ENCODE measurements at regions of chr10 and their contacts with region 1.

Region 1: DNA sequence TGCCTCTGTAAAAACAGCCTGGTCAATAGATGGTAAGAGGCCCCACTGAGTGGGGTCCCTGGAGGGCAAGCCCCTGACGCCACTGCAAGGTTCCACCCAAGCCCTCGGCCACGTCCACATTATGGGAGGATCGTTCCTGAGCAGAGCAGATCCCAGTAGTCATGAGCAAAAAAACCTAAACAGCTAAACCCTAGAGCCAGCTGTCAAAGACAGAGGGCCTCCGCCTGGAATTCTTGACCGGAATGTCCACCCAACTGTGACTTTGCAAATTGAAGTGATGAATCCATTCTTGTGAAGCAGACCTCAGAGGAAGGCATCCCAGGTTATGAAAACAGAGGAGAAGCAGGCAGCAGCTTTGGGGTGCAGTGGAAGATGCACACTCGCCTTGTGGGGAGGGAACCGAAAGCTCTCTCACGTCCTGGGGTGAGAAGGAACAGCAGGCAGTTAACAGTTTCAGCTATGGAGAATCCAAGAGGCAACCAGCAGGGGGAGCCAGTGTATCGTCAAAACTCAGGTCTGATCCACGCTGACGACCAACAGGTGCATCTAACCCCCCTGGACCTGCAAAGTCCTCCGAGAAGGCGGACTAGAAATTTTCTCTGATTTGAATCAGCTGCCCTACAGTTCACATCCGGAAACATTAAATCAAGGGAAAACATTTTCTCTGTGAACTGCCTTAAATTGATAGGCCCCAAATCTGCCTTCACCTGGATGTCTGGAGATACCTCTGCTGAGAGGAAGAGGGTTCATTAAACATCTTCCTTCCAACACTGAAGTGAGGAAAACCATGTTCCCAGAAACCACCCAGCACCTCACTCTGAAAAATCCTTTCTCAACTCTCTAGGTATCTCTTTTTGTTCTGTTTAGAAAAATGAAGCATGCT is 139.1 kb upstream of the PFKP start:
- DNase-seq: peak; percentile 58 to 95
- H3K4me3 ChIP-seq: no peak overlapping the region
- H3K27ac ChIP-seq: no peak overlapping the region
- H3K4me1 ChIP-seq: peaks cover 0 to 11% (median 5%) of the 10 kb centered on the region in 4 experiments; a peak in 6 of 7 replicates
- H3K27me3 ChIP-seq: peaks cover 0 to 2% (median 0%) of the 10 kb centered on the region in 4 experiments; a peak in 2 of 7 replicates
- CTCF ChIP-seq: peak; percentile 76 to 93 (median 92)
- EP300 ChIP-seq: no peak
- POLR2A ChIP-seq: no peak
- RAD21 ChIP-seq: peak; percentile 97 to 98

Region 2: GRCh38 chr10:2519139-2519538 is 409.1 kb before region 1 on chr10:
- CTCF ChIA-PET with region 1: no interaction called
- POLR2A ChIA-PET with region 1: no interaction called
- DNase-seq: no peak
- H3K4me3 ChIP-seq: no peak overlapping the region
- H3K27ac ChIP-seq: no peak overlapping the region
- H3K4me1 ChIP-seq: no peaks in the 10 kb centered on the region
- H3K27me3 ChIP-seq: no peaks in the 10 kb centered on the region
- CTCF ChIP-seq: no peak
- EP300 ChIP-seq: no peak
- POLR2A ChIP-seq: no peak
- RAD21 ChIP-seq: no peak

Region 3: GRCh38 chr10:2856598-2856997 is 71.6 kb before region 1 on chr10:
- CTCF ChIA-PET with region 1: no interaction called
- POLR2A ChIA-PET with region 1: no interaction called
- DNase-seq: no peak
- H3K4me3 ChIP-seq: no peak overlapping the region
- H3K27ac ChIP-seq: no peak overlapping the region
- H3K4me1 ChIP-seq: no peaks in the 10 kb centered on the region
- H3K27me3 ChIP-seq: no peaks in the 10 kb centered on the region
- CTCF ChIP-seq: no peak
- EP300 ChIP-seq: no peak
- POLR2A ChIP-seq: no peak
- RAD21 ChIP-seq: no peak

Region 4: GRCh38 chr10:2913474-2913873 is 14.7 kb before region 1 on chr10:
- CTCF ChIA-PET with region 1: interaction called, 15 read pairs
- POLR2A ChIA-PET with region 1: no interaction called
- DNase-seq: no peak
- H3K4me3 ChIP-seq: no peak overlapping the region
- H3K27ac ChIP-seq: no peak overlapping the region
- H3K4me1 ChIP-seq: peaks cover 0 to 3% (median 1%) of the 10 kb centered on the region in 4 experiments; a peak in 4 of 7 replicates
- H3K27me3 ChIP-seq: no peaks in the 10 kb centered on the region
- CTCF ChIP-seq: no peak
- EP300 ChIP-seq: no peak
- POLR2A ChIP-seq: no peak
- RAD21 ChIP-seq: no peak

Region 5: DNA sequence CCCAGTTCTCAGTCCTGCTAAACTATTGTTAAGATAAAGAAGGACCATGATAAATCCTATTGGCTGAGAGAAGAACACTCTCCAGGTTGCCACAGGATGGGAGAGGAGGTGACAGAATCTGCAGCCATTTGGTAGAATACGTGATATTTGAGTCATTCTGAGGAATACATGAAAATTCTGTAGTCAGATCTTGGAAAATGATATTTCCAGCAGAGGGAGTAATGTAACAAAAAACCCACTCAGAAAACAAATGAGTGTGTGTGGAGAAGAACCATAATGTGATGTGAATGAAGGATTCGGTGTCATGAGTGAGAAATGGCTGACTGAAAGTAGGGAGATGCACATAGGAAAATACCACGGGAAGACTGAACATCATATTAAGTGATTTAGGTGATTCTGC is 10.7 kb after region 1 on chr10:
- CTCF ChIA-PET with region 1: interaction called, 13 read pairs
- POLR2A ChIA-PET with region 1: no interaction called
- DNase-seq: no peak
- H3K4me3 ChIP-seq: no peak overlapping the region
- H3K27ac ChIP-seq: no peak overlapping the region
- H3K4me1 ChIP-seq: peaks cover 0 to 3% (median 0%) of the 10 kb centered on the region in 4 experiments; a peak in 1 of 7 replicates
- H3K27me3 ChIP-seq: peaks cover 0 to 2% (median 0%) of the 10 kb centered on the region in 4 experiments; a peak in 1 of 7 replicates
- CTCF ChIP-seq: no peak
- EP300 ChIP-seq: no peak
- POLR2A ChIP-seq: no peak
- RAD21 ChIP-seq: no peak

Region 6: DNA sequence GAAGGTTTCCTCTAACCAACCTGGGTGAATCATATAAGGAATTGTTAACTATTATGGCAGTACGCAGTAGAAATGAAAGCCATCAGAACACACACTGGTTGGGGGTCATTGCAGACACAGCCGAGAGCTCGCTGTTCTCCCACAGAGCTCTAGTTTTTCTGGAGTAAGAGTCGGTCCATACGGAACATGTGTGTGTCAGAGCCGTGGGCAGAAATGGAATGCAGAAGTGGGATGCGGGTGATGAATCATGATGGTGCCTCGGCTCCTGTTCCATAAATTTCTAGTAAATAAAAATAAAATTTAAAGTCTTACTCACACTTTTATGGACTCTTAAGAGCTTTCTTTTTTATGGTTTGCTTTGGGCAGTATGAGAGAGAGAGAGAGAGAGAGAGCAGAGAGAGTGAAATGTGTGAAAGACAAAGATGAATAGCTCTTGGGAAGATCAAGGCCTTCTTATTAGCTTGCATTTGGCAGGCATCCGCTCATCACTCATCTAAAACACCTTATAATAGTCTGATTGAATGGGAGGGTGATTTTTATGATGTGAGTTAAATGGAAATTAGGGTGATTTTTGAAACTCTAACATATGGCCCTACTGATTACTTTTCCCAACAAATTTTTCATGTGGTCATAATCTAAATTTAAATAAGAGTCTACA is 40.3 kb after region 1 on chr10:
- CTCF ChIA-PET with region 1: interaction called, 12 read pairs
- POLR2A ChIA-PET with region 1: no interaction called
- DNase-seq: no peak
- H3K4me3 ChIP-seq: no peak overlapping the region
- H3K27ac ChIP-seq: no peak overlapping the region
- H3K4me1 ChIP-seq: peaks cover 4 to 10% (median 5%) of the 10 kb centered on the region in 4 experiments
- H3K27me3 ChIP-seq: no peaks in the 10 kb centered on the region
- CTCF ChIP-seq: no peak
- EP300 ChIP-seq: no peak
- POLR2A ChIP-seq: no peak
- RAD21 ChIP-seq: no peak

Region 7: DNA sequence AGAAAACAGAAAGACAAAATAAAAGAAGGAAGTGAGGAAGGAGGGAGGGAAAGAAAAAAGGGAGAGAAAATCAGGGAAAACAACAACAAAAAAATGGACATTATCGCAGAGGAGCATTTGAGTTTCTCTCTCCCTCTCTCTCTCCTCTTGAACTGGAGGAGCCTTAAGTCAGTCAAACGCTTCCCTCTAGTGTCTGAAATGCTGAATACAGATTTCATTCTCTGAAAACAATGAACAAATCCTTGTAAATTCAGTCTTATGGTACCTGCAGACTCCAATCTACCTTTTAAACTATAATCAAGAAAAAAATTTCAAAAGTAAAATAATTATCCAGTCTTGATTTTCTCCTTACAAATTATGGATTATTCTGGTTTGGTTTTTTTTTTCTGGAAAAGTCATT is 49.9 kb after region 1 on chr10:
- CTCF ChIA-PET with region 1: interaction called, 59 read pairs
- POLR2A ChIA-PET with region 1: no interaction called
- DNase-seq: no peak
- H3K4me3 ChIP-seq: no peak overlapping the region
- H3K27ac ChIP-seq: no peak overlapping the region
- H3K4me1 ChIP-seq: 0 out of 7 replicates have a peak, but pooled peaks cover 0 to 2% (median 0%) of the 10 kb centered on the region in 4 experiments
- H3K27me3 ChIP-seq: no peaks in the 10 kb centered on the region
- CTCF ChIP-seq: peak in 2 of 3 experiments; percentile 59 to 61; a peak in 3 of 4 replicates
- EP300 ChIP-seq: no peak
- POLR2A ChIP-seq: no peak
- RAD21 ChIP-seq: peak; percentile 92 to 94

Region 8: DNA sequence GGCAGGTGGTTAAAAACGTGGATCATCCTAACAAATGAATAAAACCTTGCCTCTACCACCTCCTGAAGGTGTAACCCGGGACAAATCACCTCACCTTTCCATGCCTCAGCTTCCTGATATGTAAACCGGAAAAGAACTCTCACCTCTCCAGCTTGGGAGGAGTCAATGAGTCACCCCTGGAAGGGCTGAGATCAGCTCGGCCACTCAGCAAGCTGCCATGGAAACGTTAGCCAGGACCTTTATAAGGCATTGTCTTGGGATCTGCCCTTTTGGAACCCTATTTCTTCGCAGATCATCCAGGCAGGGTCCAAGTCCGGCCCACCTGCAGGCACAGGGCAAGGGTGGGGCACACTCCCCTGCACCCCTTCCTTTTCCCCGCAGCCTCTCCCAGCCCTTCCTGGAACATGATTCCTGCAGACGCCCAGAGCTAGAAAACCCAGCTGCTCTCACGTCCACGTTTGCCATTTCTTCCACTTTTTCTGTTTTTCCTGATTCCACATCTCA is 57.6 kb after region 1 on chr10:
- CTCF ChIA-PET with region 1: interaction called, 12 read pairs
- POLR2A ChIA-PET with region 1: no interaction called
- DNase-seq: peak in 1 of 2 experiments; percentile 31
- H3K4me3 ChIP-seq: no peak overlapping the region
- H3K27ac ChIP-seq: no peak overlapping the region
- H3K4me1 ChIP-seq: peaks cover 0 to 5% (median 1%) of the 10 kb centered on the region in 4 experiments; a peak in 2 of 7 replicates
- H3K27me3 ChIP-seq: no peaks in the 10 kb centered on the region
- CTCF ChIP-seq: no peak
- EP300 ChIP-seq: no peak
- POLR2A ChIP-seq: no peak
- RAD21 ChIP-seq: no peak

Region 9: GRCh38 chr10:3105905-3106304 is 177.7 kb after region 1 on chr10:
- CTCF ChIA-PET with region 1: no interaction called
- POLR2A ChIA-PET with region 1: no interaction called
- DNase-seq: no peak
- H3K4me3 ChIP-seq: no peak overlapping the region
- H3K27ac ChIP-seq: no peak overlapping the region
- H3K4me1 ChIP-seq: peaks cover 0 to 4% (median 0%) of the 10 kb centered on the region in 4 experiments; a peak in 1 of 7 replicates
- H3K27me3 ChIP-seq: no peaks in the 10 kb centered on the region
- CTCF ChIP-seq: no peak
- EP300 ChIP-seq: no peak
- POLR2A ChIP-seq: no peak
- RAD21 ChIP-seq: no peak